PC-3 (cell line): ENCODE measurements at regions of chr5 and their contacts with region 1.

Region 1: DNA sequence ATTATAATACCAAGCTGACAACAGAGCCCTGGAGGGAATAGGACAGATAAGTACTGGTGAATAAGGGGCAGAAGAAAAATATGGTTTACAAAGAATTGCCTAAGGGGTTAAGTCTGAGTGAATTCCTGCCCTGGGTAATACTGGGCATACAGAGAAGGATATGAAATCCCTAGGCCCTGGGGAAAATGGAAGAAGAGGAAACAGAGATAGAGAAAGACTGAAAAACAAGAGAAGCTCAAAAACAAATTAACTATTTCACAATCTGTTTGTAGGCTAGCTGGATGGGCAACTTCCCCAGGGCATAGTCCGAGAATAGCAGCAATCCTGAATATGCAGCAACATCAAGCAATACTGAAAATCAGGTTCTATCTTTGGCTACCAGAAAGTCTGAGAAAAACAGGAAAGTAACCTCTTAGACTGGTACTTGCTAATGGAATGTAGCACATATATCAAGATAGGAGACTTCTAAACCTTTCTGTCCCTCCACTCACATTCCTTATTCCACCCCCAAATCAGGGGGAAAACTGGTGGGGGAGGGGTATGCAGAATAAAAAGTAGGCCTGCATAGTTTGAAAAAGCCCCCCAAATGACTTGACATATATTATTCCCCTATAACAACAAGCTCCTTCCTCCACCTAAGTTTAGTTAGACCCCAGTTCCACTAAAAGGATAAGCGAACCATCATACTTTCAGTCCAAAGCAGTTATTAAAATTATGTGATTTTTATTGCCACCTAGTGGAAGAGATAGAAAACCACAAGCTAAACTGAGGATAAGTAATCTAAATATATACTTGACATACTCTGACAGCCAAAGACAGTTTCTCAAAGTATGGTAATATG is 20.6 kb downstream of the SLC38A9 start:
- DNase-seq: peak; percentile 48
- ATAC-seq: no peak
- H3K4me3 ChIP-seq: no peak overlapping the region
- H3K27ac ChIP-seq: no peak overlapping the region
- H3K4me1 ChIP-seq: no peaks in the 10 kb centered on the region
- H3K27me3 ChIP-seq: no peaks in the 10 kb centered on the region
- CTCF ChIP-seq: peak; percentile 64

Region 2: GRCh38 chr5:55172051-55172899 is 519.2 kb before region 1 on chr5:
- CTCF ChIA-PET with region 1: no interaction called
- POLR2A ChIA-PET with region 1: no interaction called
- intact Hi-C with region 1: loop called (anchors 5 kb)
- DNase-seq: peak; percentile 78
- ATAC-seq: peak; percentile 41
- H3K4me3 ChIP-seq: peak overlapping the region; percentile 74
- H3K27ac ChIP-seq: no peak overlapping the region
- H3K4me1 ChIP-seq: peaks cover 17% of the 10 kb centered on the region
- H3K27me3 ChIP-seq: no peaks in the 10 kb centered on the region
- CTCF ChIP-seq: peak; percentile 80

Region 3: GRCh38 chr5:55344392-55344992 is 347.0 kb before region 1 on chr5:
- CTCF ChIA-PET with region 1: no interaction called
- POLR2A ChIA-PET with region 1: no interaction called
- intact Hi-C with region 1: loop called (anchors 1 kb)
- DNase-seq: peak; percentile 68
- ATAC-seq: no peak
- H3K4me3 ChIP-seq: no peak overlapping the region
- H3K27ac ChIP-seq: no peak overlapping the region
- H3K4me1 ChIP-seq: no peaks in the 10 kb centered on the region
- H3K27me3 ChIP-seq: no peaks in the 10 kb centered on the region
- CTCF ChIP-seq: peak; percentile 71

Region 4: DNA sequence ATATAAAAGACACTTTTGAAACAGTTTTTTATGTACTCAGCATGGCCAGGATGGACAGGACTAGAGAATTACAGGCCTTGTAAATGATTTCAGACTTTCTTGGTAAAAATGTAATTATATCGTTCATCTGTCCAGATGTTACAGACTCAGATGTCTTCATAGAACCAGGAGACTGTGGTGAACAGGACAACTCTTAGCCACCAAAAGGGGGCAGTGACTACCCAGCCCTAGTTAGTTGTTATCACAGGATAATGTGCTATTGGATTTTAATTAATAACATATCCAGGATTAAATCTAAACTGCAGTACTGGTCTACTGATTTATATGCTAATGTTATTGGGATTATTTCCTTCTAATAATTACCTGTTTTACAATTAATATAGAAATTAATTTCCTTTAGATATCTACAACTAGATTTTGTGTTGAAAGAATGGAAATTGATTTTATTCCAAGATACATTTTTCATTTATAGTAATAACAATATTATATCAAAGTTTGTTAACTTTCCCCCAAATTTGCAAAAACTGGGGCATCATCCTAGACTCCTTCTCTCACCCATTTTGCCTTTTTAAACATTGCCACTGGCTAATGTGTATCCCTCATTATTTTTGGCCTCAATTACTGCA is 284.3 kb before region 1 on chr5:
- CTCF ChIA-PET with region 1: interaction called, 4 read pairs
- POLR2A ChIA-PET with region 1: interaction called, 3 read pairs
- intact Hi-C with region 1: loop called (anchors 2 kb)
- DNase-seq: peak; percentile 42
- ATAC-seq: peak; percentile 67
- H3K4me3 ChIP-seq: no peak overlapping the region
- H3K27ac ChIP-seq: no peak overlapping the region
- H3K4me1 ChIP-seq: no peaks in the 10 kb centered on the region
- H3K27me3 ChIP-seq: no peaks in the 10 kb centered on the region
- CTCF ChIP-seq: peak; percentile 75

Region 5: DNA sequence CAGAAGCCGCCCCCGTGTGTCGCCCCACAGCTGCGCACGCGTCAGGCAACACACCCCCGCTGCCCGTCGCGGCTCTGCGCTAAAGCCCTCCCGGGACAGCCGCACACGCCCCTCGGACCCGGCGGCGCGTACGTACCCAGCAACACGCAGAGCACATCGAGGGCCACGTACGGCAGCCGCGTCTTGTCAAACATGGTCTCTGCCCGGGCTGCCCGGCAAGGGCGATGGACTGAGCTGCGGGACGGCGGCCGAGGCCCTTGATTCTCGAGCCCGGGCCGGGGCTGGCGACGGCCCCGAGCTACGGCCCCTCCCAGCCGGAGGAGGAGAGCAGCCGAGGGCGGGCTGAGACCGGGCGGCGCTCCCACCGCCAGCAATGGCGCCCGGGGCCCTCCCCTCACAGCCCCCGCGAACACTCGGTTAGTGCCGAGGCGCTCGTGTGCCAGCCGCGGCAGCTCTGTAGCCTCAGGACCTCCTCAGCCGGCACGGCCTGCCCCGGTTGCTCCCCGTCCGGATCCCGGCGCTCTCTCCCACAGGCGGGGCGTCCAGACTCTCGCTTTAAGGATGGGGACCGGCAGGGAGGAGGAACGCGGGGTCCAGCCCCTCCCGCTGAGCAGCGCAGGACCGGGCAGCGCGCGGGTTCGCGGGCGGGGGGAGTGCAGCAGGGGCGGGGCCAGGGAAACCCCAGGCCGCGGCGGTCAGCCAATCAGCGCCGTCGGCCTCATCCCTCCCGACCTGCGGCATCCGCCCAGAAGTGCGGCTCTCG is 156.9 kb before region 1 on chr5 and contains the start of gene PLPP1:
- CTCF ChIA-PET with region 1: interaction called, 3 read pairs
- POLR2A ChIA-PET with region 1: no interaction called
- intact Hi-C with region 1: loop called (anchors 2 kb)
- DNase-seq: peak; percentile 73
- ATAC-seq: peak; percentile 81
- H3K4me3 ChIP-seq: peak within 1 kb of the TSS; percentile 86
- H3K27ac ChIP-seq: peak within 1 kb of the TSS; percentile 28
- H3K4me1 ChIP-seq: peaks cover 5% of the 10 kb centered on the region; the same call in 1 of the 2 replicates
- H3K27me3 ChIP-seq: no peaks in the 10 kb centered on the region
- CTCF ChIP-seq: no peak
- total RNA-seq, gene PLPP1: 16.2 and 21.1 TPM in 2 replicates